ENCODE measurements at regions of chr6 and their contacts with region 1.

Region 1: GRCh38 chr6:132414761-132415160 is 13.5 kb upstream of the MOXD1 start:
- DNase-seq: no peak
- ATAC-seq: no peak
- H3K4me3 ChIP-seq: no peak overlapping the region
- H3K27ac ChIP-seq: no peak overlapping the region
- H3K4me1 ChIP-seq: no peaks in the 10 kb centered on the region
- H3K27me3 ChIP-seq: no peaks in the 10 kb centered on the region
- CTCF ChIP-seq: no peak
- POLR2A ChIP-seq: no peak
- RAD21 ChIP-seq: no peak

Region 2: GRCh38 chr6:132471788-132472187 is 57.0 kb after region 1 on chr6:
- CTCF ChIA-PET with region 1: no interaction called
- POLR2A ChIA-PET with region 1: no interaction called
- dilution Hi-C with region 1: no loop called
- in situ Hi-C with region 1: loop called (anchors 5 kb)
- intact Hi-C with region 1: no loop called
- DNase-seq: no peak
- ATAC-seq: no peak
- H3K4me3 ChIP-seq: no peak overlapping the region
- H3K27ac ChIP-seq: no peak overlapping the region
- H3K4me1 ChIP-seq: peaks cover 2% of the 10 kb centered on the region; the same call in 1 of the 2 replicates
- H3K27me3 ChIP-seq: no peaks in the 10 kb centered on the region
- CTCF ChIP-seq: no peak
- POLR2A ChIP-seq: no peak
- RAD21 ChIP-seq: no peak